Mammary epithelial cell (primary cell): ENCODE measurements at regions of chr17 and their contacts with region 1.

Region 1: GRCh38 chr17:37725601-37726146 is 19.2 kb downstream of the HNF1B start:
- DNase-seq: no peak
- H3K4me3 ChIP-seq: no peak overlapping the region
- H3K27ac ChIP-seq: no peak overlapping the region
- H3K4me1 ChIP-seq: no peaks in the 10 kb centered on the region
- H3K27me3 ChIP-seq: peaks cover 4% of the 10 kb centered on the region
- CTCF ChIP-seq: no peak

Region 2: GRCh38 chr17:37762666-37763065 is 37.0 kb after region 1 on chr17:
- CTCF ChIA-PET with region 1: no interaction called
- dilution Hi-C with region 1: no loop called
- in situ Hi-C with region 1: no loop called
- intact Hi-C with region 1: loop called (anchors 2 kb)
- DNase-seq: no peak
- H3K4me3 ChIP-seq: no peak overlapping the region
- H3K27ac ChIP-seq: no peak overlapping the region
- H3K4me1 ChIP-seq: no peaks in the 10 kb centered on the region
- H3K27me3 ChIP-seq: peaks cover 4% of the 10 kb centered on the region
- CTCF ChIP-seq: no peak